Naive thymus-derived CD4-positive, alpha-beta T cell (primary cell): ENCODE measurements at regions of chr5 and their contacts with region 1.

Region 1: DNA sequence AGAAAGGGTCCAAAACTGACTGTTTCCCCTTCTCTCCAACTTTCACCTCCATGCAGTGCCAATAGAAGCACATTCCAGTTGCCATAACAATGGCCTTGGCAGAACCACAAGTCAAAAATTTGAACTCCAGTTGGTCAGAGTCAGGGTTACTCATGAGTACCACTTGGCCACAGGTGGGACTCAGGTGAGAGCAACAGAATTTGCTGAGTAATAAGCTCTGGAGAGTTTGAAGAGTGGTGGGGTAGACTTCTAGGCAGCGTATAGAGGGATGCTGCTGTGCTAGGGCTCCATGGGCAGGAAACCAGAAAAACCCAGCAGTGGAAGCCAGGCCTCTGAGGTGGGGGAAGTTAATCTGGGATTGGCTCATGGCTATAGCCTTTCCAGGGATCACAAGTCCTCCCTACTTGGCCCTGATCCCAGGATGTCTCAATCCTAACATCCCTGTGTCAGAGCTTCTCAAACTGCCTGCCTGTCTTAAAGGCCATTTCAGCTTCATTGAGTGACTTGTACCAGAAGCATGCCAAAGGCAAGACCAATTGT is 30.2 kb downstream of the SNX18 start:
- DNase-seq: no peak
- ATAC-seq: no peak
- H3K4me3 ChIP-seq: no peak overlapping the region
- H3K4me3 Mint-ChIP-seq: no peak overlapping the region
- H3K27ac ChIP-seq: no peak overlapping the region
- H3K27ac Mint-ChIP-seq: peak overlapping the region in 1 of 9 donors; percentile 53
- H3K4me1 ChIP-seq: no peaks in the 10 kb centered on the region
- H3K4me1 Mint-ChIP-seq: peaks cover 2 to 10% (median 6%) of the 10 kb centered on the region in 7 donors
- H3K27me3 ChIP-seq: no peaks in the 10 kb centered on the region
- H3K27me3 Mint-ChIP-seq: no peaks in the 10 kb centered on the region

Region 2: GRCh38 chr5:54517174-54518092 is 30.3 kb before region 1 on chr5 and contains the start of gene SNX18:
- CTCF ChIA-PET with region 1: no interaction called
- POLR2A ChIA-PET with region 1: no interaction called
- intact Hi-C with region 1: no loop called
- DNase-seq: peak; percentile 87 to 94 (median 92)
- ATAC-seq: peak; percentile 98
- H3K4me3 ChIP-seq: peak within 1 kb of the TSS; percentile 62
- H3K4me3 Mint-ChIP-seq: peak within 1 kb of the TSS; percentile 62 to 94 (median 91)
- H3K27ac ChIP-seq: peak within 1 kb of the TSS; percentile 83
- H3K27ac Mint-ChIP-seq: peak within 1 kb of the TSS in 8 of 9 donors; percentile 52 to 87 (median 69)
- H3K4me1 ChIP-seq: peaks cover 18 to 37% of the 10 kb centered on the region in 2 donors
- H3K4me1 Mint-ChIP-seq: peaks cover 26 to 48% (median 41%) of the 10 kb centered on the region in 7 donors
- H3K27me3 ChIP-seq: no peaks in the 10 kb centered on the region
- H3K27me3 Mint-ChIP-seq: peaks cover 0 to 29% (median 0%) of the 10 kb centered on the region in 5 donors
- total RNA-seq, gene SNX18: 14.3 to 40.9 (median 28.1) TPM

Region 3: GRCh38 chr5:54533541-54534190 is 14.1 kb before region 1 on chr5:
- CTCF ChIA-PET with region 1: no interaction called
- POLR2A ChIA-PET with region 1: no interaction called
- intact Hi-C with region 1: loop called in 1 of 2 experiments (anchors 2 kb)
- DNase-seq: no peak
- ATAC-seq: no peak
- H3K4me3 ChIP-seq: no peak overlapping the region
- H3K4me3 Mint-ChIP-seq: peak overlapping the region in 2 of 10 donors; percentile 17 to 19
- H3K27ac ChIP-seq: no peak overlapping the region
- H3K27ac Mint-ChIP-seq: peak overlapping the region in 3 of 9 donors; percentile 0 to 54 (median 39)
- H3K4me1 ChIP-seq: peaks cover 3 to 15% of the 10 kb centered on the region in 2 donors
- H3K4me1 Mint-ChIP-seq: peaks cover 35 to 66% (median 53%) of the 10 kb centered on the region in 7 donors
- H3K27me3 ChIP-seq: no peaks in the 10 kb centered on the region
- H3K27me3 Mint-ChIP-seq: no peaks in the 10 kb centered on the region